ENCODE measurements at regions of chr6 and their contacts with region 1.

Region 1: DNA sequence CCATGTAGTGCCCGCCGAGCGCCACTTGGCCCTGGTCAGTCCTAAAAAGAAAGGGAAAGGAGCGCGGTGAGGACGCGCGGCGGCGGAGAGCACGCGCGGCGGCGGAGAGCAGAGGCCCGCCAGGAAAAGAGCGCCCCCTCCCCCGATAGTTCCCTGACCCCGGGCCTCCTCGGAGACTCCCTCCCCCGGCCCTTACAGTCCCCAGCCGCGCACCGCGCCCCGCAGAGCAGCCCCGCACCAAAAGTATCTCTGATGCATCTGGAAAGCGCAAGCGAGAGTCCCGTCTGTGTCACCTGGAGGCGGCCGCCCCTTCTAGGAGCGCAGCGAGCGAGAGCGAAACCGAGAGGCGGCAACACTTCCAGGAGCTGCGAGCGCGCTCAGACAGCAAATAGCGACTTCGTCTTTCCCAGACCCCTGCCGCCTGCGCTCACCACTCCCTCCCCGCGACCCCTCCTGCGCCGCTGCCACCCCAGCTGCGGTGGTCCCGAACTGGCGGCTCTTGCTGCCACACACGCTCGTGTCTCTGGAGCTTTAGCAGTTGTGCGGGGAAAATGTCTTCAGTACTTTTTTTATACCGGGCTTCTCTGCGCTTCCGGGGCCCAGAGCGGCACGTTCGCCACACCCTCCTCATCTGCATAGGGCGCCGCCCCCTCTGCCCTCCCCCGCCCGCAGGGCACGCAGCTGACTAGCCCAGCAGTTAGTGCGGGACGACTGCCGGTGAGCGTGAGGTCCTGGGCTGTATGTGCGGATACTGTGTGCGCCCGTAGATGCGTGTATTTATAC is at the start of gene TENT5A:
- DNase-seq: peak; percentile 89
- H3K4me3 Mint-ChIP-seq: peak within 1 kb of the TSS; percentile 85
- H3K27ac Mint-ChIP-seq: peak within 1 kb of the TSS; percentile 72
- H3K4me1 Mint-ChIP-seq: peaks cover 33% of the 10 kb centered on the region
- H3K27me3 Mint-ChIP-seq: peaks cover 17% of the 10 kb centered on the region
- total RNA-seq, gene TENT5A: 0.51 to 1.1 TPM

Region 2: GRCh38 chr6:80004173-80005072 is 1747.9 kb before region 1 on chr6 and contains the start of gene TTK:
- CTCF ChIA-PET with region 1: no interaction called
- POLR2A ChIA-PET with region 1: no interaction called
- intact Hi-C with region 1: loop called (anchors 2 kb)
- DNase-seq: peak; percentile 94
- H3K4me3 Mint-ChIP-seq: peak within 1 kb of the TSS; percentile 94
- H3K27ac Mint-ChIP-seq: peak within 1 kb of the TSS; percentile 86
- H3K4me1 Mint-ChIP-seq: peaks cover 28% of the 10 kb centered on the region
- H3K27me3 Mint-ChIP-seq: peaks cover 3% of the 10 kb centered on the region
- total RNA-seq, gene TTK: 37.2 to 39.4 TPM

Region 3: DNA sequence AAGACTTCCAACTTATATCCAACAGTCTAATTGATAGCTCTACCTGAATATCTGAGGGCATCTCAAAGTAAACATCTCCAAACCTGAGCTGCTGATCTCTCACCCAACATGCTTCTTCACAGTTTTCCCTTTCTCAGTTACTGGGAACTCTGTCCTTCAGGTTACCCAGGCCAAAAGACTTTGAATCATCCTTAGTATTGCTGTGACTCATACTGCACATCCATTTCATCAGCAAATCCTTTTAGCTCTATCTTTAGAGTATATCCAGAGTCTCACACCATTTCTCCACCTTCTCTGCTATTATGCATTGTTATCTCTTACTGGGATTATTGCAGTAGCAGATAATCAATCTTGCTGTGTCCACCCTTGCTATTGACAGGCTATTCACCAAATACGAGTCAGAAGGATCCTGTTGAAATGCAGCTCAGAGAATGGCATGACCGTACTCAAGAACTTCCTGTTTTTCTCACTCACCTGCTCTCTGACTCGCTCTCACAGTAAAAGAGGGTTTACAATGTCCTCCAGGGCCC is 1588.6 kb before region 1 on chr6:
- CTCF ChIA-PET with region 1: no interaction called
- POLR2A ChIA-PET with region 1: no interaction called
- intact Hi-C with region 1: loop called (anchors 5 kb)
- DNase-seq: peak; percentile 11
- H3K4me3 Mint-ChIP-seq: no peak overlapping the region
- H3K27ac Mint-ChIP-seq: no peak overlapping the region
- H3K4me1 Mint-ChIP-seq: peaks cover 14% of the 10 kb centered on the region
- H3K27me3 Mint-ChIP-seq: no peaks in the 10 kb centered on the region

Region 4: GRCh38 chr6:80338201-80338836 is 1414.0 kb before region 1 on chr6:
- CTCF ChIA-PET with region 1: interaction called, 3 read pairs
- POLR2A ChIA-PET with region 1: no interaction called
- intact Hi-C with region 1: loop called (anchors 1 kb)
- DNase-seq: peak; percentile 68
- H3K4me3 Mint-ChIP-seq: no peak overlapping the region
- H3K27ac Mint-ChIP-seq: no peak overlapping the region
- H3K4me1 Mint-ChIP-seq: no peaks in the 10 kb centered on the region
- H3K27me3 Mint-ChIP-seq: no peaks in the 10 kb centered on the region

Region 5: GRCh38 chr6:81451787-81452186 is 300.5 kb before region 1 on chr6:
- CTCF ChIA-PET with region 1: no interaction called
- POLR2A ChIA-PET with region 1: no interaction called
- intact Hi-C with region 1: loop called (anchors 5 kb)
- DNase-seq: no peak
- H3K4me3 Mint-ChIP-seq: no peak overlapping the region
- H3K27ac Mint-ChIP-seq: no peak overlapping the region
- H3K4me1 Mint-ChIP-seq: no peaks in the 10 kb centered on the region
- H3K27me3 Mint-ChIP-seq: no peaks in the 10 kb centered on the region

Region 6: DNA sequence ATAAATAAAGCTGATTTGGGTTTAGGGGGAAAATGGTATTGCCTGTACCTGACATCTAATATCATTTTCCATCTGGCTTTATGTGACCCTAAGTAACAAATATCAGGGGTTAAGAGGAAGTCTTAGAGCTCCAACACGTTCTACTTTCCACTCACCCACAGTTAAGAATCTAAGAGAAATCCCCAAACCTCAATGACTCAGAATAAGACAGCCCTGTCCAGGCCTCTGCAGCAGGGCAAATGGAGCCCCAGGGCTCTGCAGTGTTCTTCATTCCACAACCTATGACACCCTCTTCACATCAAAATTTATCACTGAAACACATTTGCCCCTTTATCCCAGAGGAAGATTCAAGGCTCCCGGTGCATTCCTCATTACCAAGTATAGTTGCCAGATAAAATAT is 20.4 kb after region 1 on chr6:
- CTCF ChIA-PET with region 1: interaction called, 3 read pairs
- POLR2A ChIA-PET with region 1: no interaction called
- intact Hi-C with region 1: loop called (anchors 1 kb)
- DNase-seq: no peak
- H3K4me3 Mint-ChIP-seq: no peak overlapping the region
- H3K27ac Mint-ChIP-seq: no peak overlapping the region
- H3K4me1 Mint-ChIP-seq: no peaks in the 10 kb centered on the region
- H3K27me3 Mint-ChIP-seq: peaks cover 4% of the 10 kb centered on the region